ENCODE measurements at regions of chr7 and their contacts with region 1.

Region 1: GRCh38 chr7:40134428-40135316 is at the starts of genes MPLKIP and SUGCT:
- DNase-seq: peak; percentile 97
- ATAC-seq: peak; percentile 91
- H3K4me3 ChIP-seq: peak within 1 kb of the TSS; percentile 87 to 95 (median 94)
- H3K4me3 Mint-ChIP-seq: peak within 1 kb of the TSS; percentile 95
- H3K27ac ChIP-seq: peak within 1 kb of the TSS; percentile 84 to 91
- H3K27ac Mint-ChIP-seq: peak within 1 kb of the TSS; percentile 98
- H3K4me1 ChIP-seq: peaks cover 18 to 22% of the 10 kb centered on the region in 2 donors
- H3K4me1 Mint-ChIP-seq: peaks cover 30% of the 10 kb centered on the region
- H3K27me3 ChIP-seq: peaks cover 0 to 3% (median 0%) of the 10 kb centered on the region in 4 experiments
- H3K27me3 Mint-ChIP-seq: peaks cover 3% of the 10 kb centered on the region
- CTCF ChIP-seq: peak; percentile 99
- total RNA-seq, gene MPLKIP: 31.4 and 34.1 TPM in 2 replicates
- total RNA-seq, gene SUGCT: 0.86 and 2.6 TPM in 2 replicates

Region 2: GRCh38 chr7:38908759-38909335 is 1225.8 kb before region 1 on chr7 and contains the start of gene VPS41:
- CTCF ChIA-PET with region 1: no interaction called
- POLR2A ChIA-PET with region 1: no interaction called
- intact Hi-C with region 1: loop called (anchors 10 kb)
- DNase-seq: peak; percentile 88
- ATAC-seq: peak; percentile 96
- H3K4me3 ChIP-seq: peak within 1 kb of the TSS; percentile 77 to 95 (median 87)
- H3K4me3 Mint-ChIP-seq: peak within 1 kb of the TSS; percentile 94
- H3K27ac ChIP-seq: peak within 1 kb of the TSS; percentile 32 to 76
- H3K27ac Mint-ChIP-seq: peak within 1 kb of the TSS; percentile 92
- H3K4me1 ChIP-seq: peaks cover 23 to 30% of the 10 kb centered on the region in 2 donors
- H3K4me1 Mint-ChIP-seq: peaks cover 46% of the 10 kb centered on the region
- H3K27me3 ChIP-seq: no peaks in the 10 kb centered on the region
- H3K27me3 Mint-ChIP-seq: no peaks in the 10 kb centered on the region
- CTCF ChIP-seq: no peak
- total RNA-seq, gene VPS41: 112 and 114 TPM in 2 replicates

Region 3: GRCh38 chr7:39566023-39566921 is 568.4 kb before region 1 on chr7 and contains the start of gene YAE1:
- CTCF ChIA-PET with region 1: no interaction called
- POLR2A ChIA-PET with region 1: no interaction called
- intact Hi-C with region 1: loop called (anchors 1 kb)
- DNase-seq: peak; percentile 86
- ATAC-seq: peak; percentile 96
- H3K4me3 ChIP-seq: peak within 1 kb of the TSS; percentile 72 to 90 (median 89)
- H3K4me3 Mint-ChIP-seq: peak within 1 kb of the TSS; percentile 100
- H3K27ac ChIP-seq: peak within 1 kb of the TSS; percentile 65 to 79
- H3K27ac Mint-ChIP-seq: peak within 1 kb of the TSS; percentile 96
- H3K4me1 ChIP-seq: peaks cover 10 to 12% of the 10 kb centered on the region in 2 donors
- H3K4me1 Mint-ChIP-seq: peaks cover 21% of the 10 kb centered on the region
- H3K27me3 ChIP-seq: no peaks in the 10 kb centered on the region
- H3K27me3 Mint-ChIP-seq: peaks cover 1% of the 10 kb centered on the region
- CTCF ChIP-seq: no peak
- total RNA-seq, gene YAE1: 20.0 and 22.9 TPM in 2 replicates

Region 4: GRCh38 chr7:40105879-40106473 is 28.7 kb before region 1 on chr7:
- CTCF ChIA-PET with region 1: no interaction called
- POLR2A ChIA-PET with region 1: no interaction called
- intact Hi-C with region 1: no loop called
- DNase-seq: no peak
- ATAC-seq: no peak
- H3K4me3 ChIP-seq: no peak overlapping the region
- H3K4me3 Mint-ChIP-seq: no peak overlapping the region
- H3K27ac ChIP-seq: no peak overlapping the region
- H3K27ac Mint-ChIP-seq: no peak overlapping the region
- H3K4me1 ChIP-seq: no peaks in the 10 kb centered on the region
- H3K4me1 Mint-ChIP-seq: no peaks in the 10 kb centered on the region
- H3K27me3 ChIP-seq: no peaks in the 10 kb centered on the region
- H3K27me3 Mint-ChIP-seq: no peaks in the 10 kb centered on the region
- CTCF ChIP-seq: no peak

Region 5: DNA sequence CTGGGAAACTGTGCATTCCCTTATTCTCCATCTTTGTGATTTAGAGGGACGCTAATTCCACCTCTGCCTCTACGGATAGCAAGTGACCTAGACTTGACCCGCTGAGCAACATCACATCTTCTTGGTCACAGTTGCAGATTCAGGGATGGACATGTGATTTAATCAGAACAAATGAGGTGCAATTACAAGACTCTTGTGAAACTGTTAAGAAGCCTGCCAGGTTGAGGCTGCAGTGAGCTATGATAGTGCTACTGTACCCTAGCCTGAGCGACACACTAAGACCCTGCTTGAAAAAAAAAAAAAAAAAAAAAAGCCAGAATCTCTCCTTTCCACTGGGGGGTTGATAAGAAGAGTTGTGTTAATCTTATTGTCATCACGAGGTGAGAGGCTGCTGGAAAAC is 14.7 kb before region 1 on chr7:
- CTCF ChIA-PET with region 1: no interaction called
- POLR2A ChIA-PET with region 1: no interaction called
- intact Hi-C with region 1: no loop called
- DNase-seq: no peak
- ATAC-seq: no peak
- H3K4me3 ChIP-seq: no peak overlapping the region
- H3K4me3 Mint-ChIP-seq: no peak overlapping the region
- H3K27ac ChIP-seq: no peak overlapping the region
- H3K27ac Mint-ChIP-seq: no peak overlapping the region
- H3K4me1 ChIP-seq: no peaks in the 10 kb centered on the region
- H3K4me1 Mint-ChIP-seq: no peaks in the 10 kb centered on the region
- H3K27me3 ChIP-seq: no peaks in the 10 kb centered on the region
- H3K27me3 Mint-ChIP-seq: no peaks in the 10 kb centered on the region
- CTCF ChIP-seq: no peak

Measured in B cell (primary cell).